GM23248 (cell line): ENCODE measurements at regions of chrX and their contacts with region 1.

Region 1: DNA sequence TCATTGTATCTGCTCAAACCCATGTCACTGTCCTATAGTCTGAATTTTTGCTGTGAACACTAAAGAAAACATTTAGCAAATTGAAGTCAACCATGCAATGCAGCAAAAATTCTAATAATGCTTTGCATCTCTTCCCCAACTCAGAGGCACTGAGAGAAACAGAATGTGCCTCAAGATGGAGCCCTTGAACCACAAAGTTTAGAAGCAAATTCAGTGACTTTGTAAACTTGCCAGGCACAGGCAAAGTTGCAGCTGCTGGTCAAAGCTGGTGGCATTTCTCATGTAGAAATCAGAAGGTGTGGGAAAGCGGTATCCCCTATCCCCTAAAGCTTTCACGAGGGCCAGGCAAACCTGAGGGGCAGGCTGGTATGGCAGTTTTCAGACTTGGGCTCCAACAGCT is 121.7 kb upstream of the DIPK2B start:
- DNase-seq: peak; percentile 81
- H3K4me3 ChIP-seq: no peak overlapping the region
- H3K27ac ChIP-seq: peak overlapping the region; percentile 70
- H3K4me1 ChIP-seq: peaks cover 22% of the 10 kb centered on the region
- H3K27me3 ChIP-seq: no peaks in the 10 kb centered on the region

Region 2: GRCh38 chrX:45527834-45528233 is 205.5 kb after region 1 on chrX:
- in situ Hi-C with region 1: no loop called
- DNase-seq: peak; percentile 59
- H3K4me3 ChIP-seq: no peak overlapping the region
- H3K27ac ChIP-seq: peak overlapping the region; percentile 51; the same call in 1 of the 2 replicates
- H3K4me1 ChIP-seq: peaks cover 8% of the 10 kb centered on the region; the same call in 1 of the 2 replicates
- H3K27me3 ChIP-seq: no peaks in the 10 kb centered on the region

Region 3: GRCh38 chrX:45743081-45743533 is 420.7 kb after region 1 on chrX:
- in situ Hi-C with region 1: loop called (anchors 25 kb)
- DNase-seq: peak; percentile 77
- H3K4me3 ChIP-seq: no peak overlapping the region
- H3K27ac ChIP-seq: peak overlapping the region; percentile 64
- H3K4me1 ChIP-seq: peaks cover 36% of the 10 kb centered on the region
- H3K27me3 ChIP-seq: no peaks in the 10 kb centered on the region